ENCODE measurements at regions of chr9 and their contacts with region 1.

Region 1: GRCh38 chr9:36450110-36450732 is 50.2 kb upstream of the RNF38 start:
- DNase-seq: peak; percentile 57
- ATAC-seq: peak; percentile 65; the same call in 1 of the 2 replicates
- H3K4me3 ChIP-seq: no peak overlapping the region
- H3K27ac ChIP-seq: no peak overlapping the region
- H3K4me1 ChIP-seq: peaks cover 2% of the 10 kb centered on the region; the same call in 1 of the 2 replicates
- H3K27me3 ChIP-seq: no peaks in the 10 kb centered on the region
- CTCF ChIP-seq: peak; percentile 79
- POLR2A ChIP-seq: no peak
- RAD21 ChIP-seq: peak; percentile 73

Region 2: DNA sequence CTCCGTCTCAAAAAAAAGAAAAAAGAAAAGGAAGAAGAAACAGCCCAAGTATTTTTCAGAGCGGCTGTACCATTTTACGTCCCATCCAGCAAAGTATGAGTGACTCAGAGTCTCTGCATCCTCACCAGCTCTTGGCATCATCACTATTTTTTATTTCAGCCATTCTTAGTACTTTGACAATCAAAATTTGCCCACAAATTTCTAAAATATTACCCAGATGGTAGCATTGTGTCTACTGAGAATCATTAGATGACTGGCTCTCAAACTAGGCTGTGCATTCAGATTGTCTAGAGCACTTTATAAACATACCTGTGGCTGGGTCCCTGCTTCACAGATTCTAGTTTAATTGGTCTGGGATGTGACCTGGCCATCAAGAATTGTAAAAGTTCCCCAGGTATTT is 100.9 kb after region 1 on chr9:
- CTCF ChIA-PET with region 1: interaction called, 5 read pairs
- POLR2A ChIA-PET with region 1: no interaction called
- dilution Hi-C with region 1: no loop called
- in situ Hi-C with region 1: no loop called
- intact Hi-C with region 1: loop called (anchors 1 kb)
- DNase-seq: no peak
- ATAC-seq: no peak
- H3K4me3 ChIP-seq: no peak overlapping the region
- H3K27ac ChIP-seq: no peak overlapping the region
- H3K4me1 ChIP-seq: no peaks in the 10 kb centered on the region
- H3K27me3 ChIP-seq: peaks cover 7% of the 10 kb centered on the region
- CTCF ChIP-seq: no peak
- POLR2A ChIP-seq: no peak
- RAD21 ChIP-seq: no peak